ENCODE measurements at regions of chr5 and their contacts with region 1.

Region 1: DNA sequence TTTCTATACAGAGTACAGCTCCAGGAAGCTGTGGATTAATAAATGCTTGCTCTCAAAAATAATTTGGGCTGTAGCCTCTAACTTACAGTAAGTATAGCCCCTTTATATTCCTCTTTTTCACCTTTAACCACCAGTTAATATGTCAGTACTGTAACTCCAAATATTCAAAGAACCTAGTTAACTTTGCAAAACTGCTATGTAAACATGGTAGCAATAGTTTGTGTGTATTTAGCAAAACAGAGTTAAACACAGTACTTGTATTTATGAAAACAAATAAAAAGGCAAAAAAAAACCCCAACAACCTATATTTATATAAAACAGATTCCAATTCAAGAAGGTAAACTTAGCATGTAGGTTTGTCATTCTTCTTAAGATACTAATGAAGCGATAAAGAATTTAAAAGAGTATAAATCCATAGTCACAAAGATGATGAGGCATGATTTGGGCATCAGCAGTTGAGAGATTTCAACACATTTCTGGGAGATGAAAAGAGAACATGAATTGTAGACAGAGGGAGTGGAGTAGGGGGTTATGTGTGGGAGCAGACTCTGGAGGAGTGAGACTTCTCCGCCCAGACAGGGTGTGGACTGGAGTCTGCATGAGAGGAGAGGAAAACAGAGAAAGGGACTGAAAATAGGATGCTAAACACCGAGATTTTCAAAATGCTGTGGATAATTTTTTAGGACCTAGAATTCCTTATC is 47.0 kb upstream of the F2RL1 start:
- DNase-seq: no peak
- ATAC-seq: no peak
- H3K4me3 ChIP-seq: no peak overlapping the region
- H3K27ac ChIP-seq: no peak overlapping the region
- H3K4me1 ChIP-seq: no peaks in the 10 kb centered on the region
- H3K27me3 ChIP-seq: no peaks in the 10 kb centered on the region
- CTCF ChIP-seq: no peak
- EP300 ChIP-seq: no peak
- POLR2A ChIP-seq: no peak
- RAD21 ChIP-seq: no peak

Region 2: DNA sequence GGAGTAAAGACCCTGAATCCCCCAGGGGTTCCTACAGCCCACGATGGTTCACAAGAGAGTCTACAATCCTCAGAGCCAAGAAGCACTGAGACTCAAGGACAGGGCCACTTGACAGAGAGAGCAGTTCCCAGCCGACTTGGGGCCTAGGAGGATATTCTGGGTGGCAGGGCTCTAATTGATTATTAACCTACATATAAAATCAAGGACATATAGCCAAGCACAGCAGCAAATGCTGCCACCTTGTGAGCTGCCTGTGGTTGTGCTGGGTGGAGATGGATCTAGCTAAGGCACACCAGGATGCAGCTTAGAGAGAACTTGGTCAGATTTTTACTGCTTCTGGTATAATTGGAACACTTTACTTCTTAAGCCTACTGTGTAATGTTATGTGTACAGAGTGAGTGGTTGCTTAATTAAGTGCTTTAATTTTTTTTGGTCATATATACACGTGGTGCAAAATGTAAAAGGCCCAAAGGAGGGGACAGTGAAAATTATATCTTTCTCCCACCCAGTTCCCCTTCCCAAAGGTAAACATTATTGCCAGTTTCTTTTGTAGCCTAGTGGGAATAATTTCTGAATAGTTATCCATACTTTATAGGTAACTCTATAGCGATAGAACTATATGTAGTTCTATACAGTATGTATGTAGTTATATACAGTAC is 227.5 kb before region 1 on chr5:
- CTCF ChIA-PET with region 1: interaction called, 5 read pairs
- POLR2A ChIA-PET with region 1: no interaction called
- RAD21 ChIA-PET with region 1: interaction called, 7 read pairs
- SMC1A ChIA-PET with region 1: interaction called, 16 read pairs
- in situ Hi-C with region 1: no loop called
- intact Hi-C with region 1: no loop called
- DNase-seq: peak; percentile 25
- ATAC-seq: peak; percentile 55
- H3K4me3 ChIP-seq: no peak overlapping the region
- H3K27ac ChIP-seq: peak overlapping the region; percentile 35; the same call in 1 of the 2 replicates
- H3K4me1 ChIP-seq: peaks cover 37% of the 10 kb centered on the region
- H3K27me3 ChIP-seq: no peaks in the 10 kb centered on the region
- CTCF ChIP-seq: peak; percentile 64 to 81 (median 68); a peak in 5 of 6 replicates
- EP300 ChIP-seq: no peak
- POLR2A ChIP-seq: no peak
- RAD21 ChIP-seq: peak; percentile 77

Region 3: DNA sequence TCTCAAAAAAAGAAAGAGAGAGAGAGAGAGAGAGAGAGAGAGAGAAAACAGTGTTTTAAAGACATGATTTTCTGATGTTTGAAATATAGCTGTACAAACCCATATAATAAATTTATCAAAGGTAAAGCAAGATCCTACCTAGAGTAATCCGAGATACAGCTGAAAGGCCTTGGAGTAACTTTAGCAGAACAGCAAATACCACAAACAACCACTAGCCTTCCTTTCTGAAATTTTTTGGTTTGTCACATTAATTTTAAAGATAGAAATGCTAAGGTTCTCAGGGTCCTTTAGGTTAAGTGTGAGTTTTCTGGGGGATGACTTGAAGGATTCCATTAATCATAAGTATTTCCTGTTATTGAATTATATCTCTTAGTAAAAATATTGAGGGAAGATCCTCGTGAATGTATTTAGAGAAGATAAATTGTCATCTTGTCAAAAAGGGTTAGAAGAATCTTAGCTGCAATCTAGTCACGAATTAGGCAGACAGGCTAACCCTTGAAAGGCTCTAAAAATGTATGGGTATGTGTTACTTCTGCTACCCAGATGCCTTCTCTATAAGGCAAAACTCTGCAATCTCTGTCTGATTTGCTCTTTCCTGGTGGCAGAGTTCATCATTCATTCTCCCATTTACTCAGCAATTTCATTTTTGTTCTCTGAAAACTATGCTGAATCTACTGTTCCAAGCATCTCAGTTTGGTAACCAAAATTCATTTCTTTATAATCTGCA is 175.9 kb before region 1 on chr5:
- CTCF ChIA-PET with region 1: interaction called, 239 read pairs
- POLR2A ChIA-PET with region 1: interaction called, 3 read pairs
- RAD21 ChIA-PET with region 1: interaction called, 166 read pairs
- SMC1A ChIA-PET with region 1: interaction called, 154 read pairs
- in situ Hi-C with region 1: loop called (anchors 5 kb)
- intact Hi-C with region 1: loop called (anchors 1 kb)
- DNase-seq: no peak
- ATAC-seq: no peak
- H3K4me3 ChIP-seq: no peak overlapping the region
- H3K27ac ChIP-seq: no peak overlapping the region
- H3K4me1 ChIP-seq: no peaks in the 10 kb centered on the region
- H3K27me3 ChIP-seq: no peaks in the 10 kb centered on the region
- CTCF ChIP-seq: no peak
- EP300 ChIP-seq: no peak
- POLR2A ChIP-seq: no peak
- RAD21 ChIP-seq: no peak

Region 4: GRCh38 chr5:76634661-76635060 is 137.2 kb before region 1 on chr5:
- CTCF ChIA-PET with region 1: interaction called, 33 read pairs
- POLR2A ChIA-PET with region 1: no interaction called
- RAD21 ChIA-PET with region 1: interaction called, 18 read pairs
- SMC1A ChIA-PET with region 1: interaction called, 19 read pairs
- in situ Hi-C with region 1: no loop called
- intact Hi-C with region 1: no loop called
- DNase-seq: no peak
- ATAC-seq: no peak
- H3K4me3 ChIP-seq: no peak overlapping the region
- H3K27ac ChIP-seq: no peak overlapping the region
- H3K4me1 ChIP-seq: peaks cover 11% of the 10 kb centered on the region; the same call in 1 of the 2 replicates
- H3K27me3 ChIP-seq: no peaks in the 10 kb centered on the region
- CTCF ChIP-seq: no peak
- EP300 ChIP-seq: no peak
- POLR2A ChIP-seq: no peak
- RAD21 ChIP-seq: no peak

Region 5: DNA sequence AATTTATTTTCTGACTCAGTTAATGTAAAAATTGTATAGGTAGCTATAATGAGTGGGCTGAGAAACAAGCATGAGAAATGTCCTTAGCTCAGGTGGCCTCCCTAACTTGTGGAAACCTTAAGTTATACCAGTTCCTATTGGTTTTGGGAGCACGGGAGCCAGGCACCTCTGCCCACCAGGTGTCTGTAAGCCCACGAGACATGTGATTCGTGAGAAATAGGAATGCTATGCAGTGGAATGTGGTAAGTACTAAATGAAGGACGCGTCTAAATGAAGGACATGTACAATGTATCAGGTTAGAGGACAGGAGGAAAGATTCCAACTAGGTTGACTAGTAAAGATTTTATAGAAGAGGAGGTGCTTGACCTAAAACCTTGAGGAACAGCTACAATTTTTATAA is 102.6 kb before region 1 on chr5:
- CTCF ChIA-PET with region 1: interaction called, 10 read pairs
- POLR2A ChIA-PET with region 1: no interaction called
- RAD21 ChIA-PET with region 1: interaction called, 4 read pairs
- SMC1A ChIA-PET with region 1: interaction called, 8 read pairs
- in situ Hi-C with region 1: no loop called
- intact Hi-C with region 1: no loop called
- DNase-seq: no peak
- ATAC-seq: no peak
- H3K4me3 ChIP-seq: no peak overlapping the region
- H3K27ac ChIP-seq: no peak overlapping the region
- H3K4me1 ChIP-seq: no peaks in the 10 kb centered on the region
- H3K27me3 ChIP-seq: no peaks in the 10 kb centered on the region
- CTCF ChIP-seq: no peak
- EP300 ChIP-seq: no peak
- POLR2A ChIP-seq: no peak
- RAD21 ChIP-seq: no peak

Region 6: DNA sequence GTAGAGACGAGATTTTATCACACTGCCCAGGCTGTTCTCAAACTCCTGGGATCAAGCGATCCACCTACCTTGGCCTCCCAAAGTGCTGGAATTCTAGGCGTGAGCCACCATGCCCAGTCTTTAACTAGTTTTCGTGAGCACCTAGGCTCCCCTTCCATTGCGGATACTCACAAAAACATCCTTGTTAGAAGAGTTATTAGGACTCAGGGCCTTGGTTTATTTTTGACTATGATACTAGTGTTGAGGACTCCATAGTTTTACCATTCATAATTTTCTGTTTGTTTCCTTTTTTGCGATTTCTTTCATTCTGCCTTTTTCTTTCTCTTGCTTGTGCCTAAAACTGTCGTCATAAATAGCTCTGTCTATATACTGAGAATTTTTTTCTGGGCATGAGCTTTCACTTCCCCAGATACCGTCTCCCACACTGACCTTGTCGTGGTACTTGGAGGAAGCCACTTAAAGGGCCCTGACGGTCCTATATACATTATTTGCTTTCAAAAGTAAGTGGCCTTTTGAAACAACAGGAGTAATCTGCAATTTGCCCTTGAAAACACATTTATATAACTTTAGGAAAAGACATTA is 50.8 kb before region 1 on chr5:
- CTCF ChIA-PET with region 1: interaction called, 122 read pairs
- POLR2A ChIA-PET with region 1: interaction called, 4 read pairs
- RAD21 ChIA-PET with region 1: interaction called, 59 read pairs
- SMC1A ChIA-PET with region 1: interaction called, 136 read pairs
- in situ Hi-C with region 1: loop called (anchors 5 kb)
- intact Hi-C with region 1: loop called (anchors 1 kb)
- DNase-seq: no peak
- ATAC-seq: peak; percentile 87
- H3K4me3 ChIP-seq: 0 out of 2 replicates have a peak overlapping the region, but pooled peaks have one; percentile 1
- H3K27ac ChIP-seq: no peak overlapping the region
- H3K4me1 ChIP-seq: peaks cover 18% of the 10 kb centered on the region
- H3K27me3 ChIP-seq: peaks cover 0 to 8% of the 10 kb centered on the region in 2 experiments; a peak in 2 of 4 replicates
- CTCF ChIP-seq: no peak
- EP300 ChIP-seq: peak; percentile 79 to 82; a peak in 2 of 4 replicates
- POLR2A ChIP-seq: no peak
- RAD21 ChIP-seq: no peak

Region 7: GRCh38 chr5:76782444-76782843 is 10.6 kb after region 1 on chr5:
- CTCF ChIA-PET with region 1: interaction called, 10 read pairs
- POLR2A ChIA-PET with region 1: no interaction called
- RAD21 ChIA-PET with region 1: interaction called, 4 read pairs
- SMC1A ChIA-PET with region 1: interaction called, 5 read pairs
- in situ Hi-C with region 1: no loop called
- intact Hi-C with region 1: no loop called
- DNase-seq: no peak
- ATAC-seq: no peak
- H3K4me3 ChIP-seq: no peak overlapping the region
- H3K27ac ChIP-seq: no peak overlapping the region
- H3K4me1 ChIP-seq: no peaks in the 10 kb centered on the region
- H3K27me3 ChIP-seq: no peaks in the 10 kb centered on the region
- CTCF ChIP-seq: no peak
- EP300 ChIP-seq: no peak
- POLR2A ChIP-seq: no peak
- RAD21 ChIP-seq: no peak

Region 8: GRCh38 chr5:76893294-76893693 is 121.4 kb after region 1 on chr5:
- CTCF ChIA-PET with region 1: no interaction called
- POLR2A ChIA-PET with region 1: no interaction called
- RAD21 ChIA-PET with region 1: no interaction called
- SMC1A ChIA-PET with region 1: no interaction called
- in situ Hi-C with region 1: no loop called
- intact Hi-C with region 1: no loop called
- DNase-seq: no peak
- ATAC-seq: no peak
- H3K4me3 ChIP-seq: no peak overlapping the region
- H3K27ac ChIP-seq: no peak overlapping the region
- H3K4me1 ChIP-seq: no peaks in the 10 kb centered on the region
- H3K27me3 ChIP-seq: no peaks in the 10 kb centered on the region; a peak in 1 of 4 replicates
- CTCF ChIP-seq: no peak
- EP300 ChIP-seq: no peak
- POLR2A ChIP-seq: no peak
- RAD21 ChIP-seq: no peak

Measured in GM12878 (cell line).